ENCODE measurements at regions of chr3 and their contacts with region 1.

Region 1: GRCh38 chr3:53072653-53073552 is 27.0 kb upstream of the SFMBT1 start:
- DNase-seq: peak; percentile 87 to 92 (median 88)
- H3K4me3 ChIP-seq: peak overlapping the region; percentile 77 to 79
- H3K4me3 Mint-ChIP-seq: peak overlapping the region; percentile 88 to 96 (median 92)
- H3K27ac ChIP-seq: peak overlapping the region; percentile 67
- H3K27ac Mint-ChIP-seq: peak overlapping the region; percentile 90 to 96 (median 94)
- H3K4me1 ChIP-seq: peaks cover 10% of the 10 kb centered on the region
- H3K4me1 Mint-ChIP-seq: peaks cover 7 to 19% (median 16%) of the 10 kb centered on the region in 4 donors
- H3K27me3 ChIP-seq: no peaks in the 10 kb centered on the region
- H3K27me3 Mint-ChIP-seq: no peaks in the 10 kb centered on the region

Region 2: GRCh38 chr3:52845691-52846431 is 227.0 kb before region 1 on chr3:
- CTCF ChIA-PET with region 1: interaction called, 6 read pairs
- POLR2A ChIA-PET with region 1: no interaction called
- intact Hi-C with region 1: loop called (anchors 1 kb)
- DNase-seq: peak in 2 of 5 donors; percentile 9 to 12
- H3K4me3 ChIP-seq: no peak overlapping the region
- H3K4me3 Mint-ChIP-seq: no peak overlapping the region
- H3K27ac ChIP-seq: no peak overlapping the region
- H3K27ac Mint-ChIP-seq: peak overlapping the region in 1 of 7 donors; percentile 77
- H3K4me1 ChIP-seq: no peaks in the 10 kb centered on the region
- H3K4me1 Mint-ChIP-seq: peaks cover 0 to 5% (median under 1%) of the 10 kb centered on the region in 4 donors
- H3K27me3 ChIP-seq: no peaks in the 10 kb centered on the region
- H3K27me3 Mint-ChIP-seq: no peaks in the 10 kb centered on the region

Region 3: DNA sequence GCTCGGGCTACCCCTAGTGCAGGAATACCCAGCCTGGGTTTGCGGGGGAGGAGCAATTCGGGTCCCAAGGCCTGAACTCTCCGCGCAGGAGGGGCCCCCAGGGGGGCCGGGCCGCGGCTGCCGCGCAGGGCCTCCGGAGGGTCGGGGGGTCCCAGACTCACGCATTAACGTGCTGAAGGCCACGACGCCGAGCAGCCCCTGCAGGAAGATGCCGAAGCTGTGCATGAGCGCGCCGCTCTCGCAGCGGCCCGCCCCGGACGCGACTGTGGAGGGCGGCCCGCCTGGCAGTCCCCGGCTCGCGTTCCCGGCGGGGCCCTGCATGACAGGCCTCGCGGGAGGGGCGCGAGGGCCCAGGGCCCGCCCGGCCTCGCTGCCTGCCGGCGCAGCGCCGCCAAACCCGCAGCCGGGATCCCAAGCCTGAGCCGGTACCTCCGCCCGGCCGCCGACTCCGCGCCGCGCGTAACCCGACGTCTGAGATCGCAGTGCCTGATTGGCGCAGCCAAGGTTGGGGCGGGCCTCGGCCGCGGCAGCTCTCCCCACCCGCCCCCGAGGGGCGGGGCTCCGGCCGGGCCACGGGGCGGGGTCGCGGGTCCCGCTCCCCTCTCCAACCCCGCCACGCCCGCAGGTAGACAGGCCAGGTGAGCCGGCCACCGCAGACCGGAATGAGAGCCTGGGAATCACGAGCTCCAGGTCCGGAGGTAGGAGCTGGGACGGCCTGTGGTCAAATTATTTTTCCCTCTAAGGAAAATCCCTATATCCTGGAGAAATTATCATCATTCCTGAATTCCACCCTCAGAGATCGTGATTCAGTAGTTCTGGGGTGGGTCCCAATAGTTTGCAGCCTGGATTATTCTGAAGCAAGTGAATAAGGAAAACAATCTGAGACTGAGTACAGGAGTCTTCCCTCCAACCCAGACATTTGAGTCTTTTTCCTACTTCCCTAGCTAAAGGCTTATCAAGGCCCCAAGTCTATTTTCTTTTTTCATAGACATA is 175.5 kb before region 1 on chr3 and contains the start of gene STIMATE:
- CTCF ChIA-PET with region 1: no interaction called
- POLR2A ChIA-PET with region 1: interaction called, 3 read pairs
- intact Hi-C with region 1: loop called (anchors 2 kb)
- DNase-seq: peak; percentile 86 to 90 (median 88)
- H3K4me3 ChIP-seq: peak within 1 kb of the TSS; percentile 78 to 94
- H3K4me3 Mint-ChIP-seq: peak within 1 kb of the TSS; percentile 88 to 97 (median 95)
- H3K27ac ChIP-seq: peak within 1 kb of the TSS; percentile 65
- H3K27ac Mint-ChIP-seq: peak within 1 kb of the TSS; percentile 86 to 97 (median 95)
- H3K4me1 ChIP-seq: peaks cover 47% of the 10 kb centered on the region
- H3K4me1 Mint-ChIP-seq: peaks cover 39 to 53% (median 47%) of the 10 kb centered on the region in 4 donors
- H3K27me3 ChIP-seq: no peaks in the 10 kb centered on the region
- H3K27me3 Mint-ChIP-seq: no peaks in the 10 kb centered on the region
- total RNA-seq, gene STIMATE: 54.9 to 58.6 TPM

Region 4: DNA sequence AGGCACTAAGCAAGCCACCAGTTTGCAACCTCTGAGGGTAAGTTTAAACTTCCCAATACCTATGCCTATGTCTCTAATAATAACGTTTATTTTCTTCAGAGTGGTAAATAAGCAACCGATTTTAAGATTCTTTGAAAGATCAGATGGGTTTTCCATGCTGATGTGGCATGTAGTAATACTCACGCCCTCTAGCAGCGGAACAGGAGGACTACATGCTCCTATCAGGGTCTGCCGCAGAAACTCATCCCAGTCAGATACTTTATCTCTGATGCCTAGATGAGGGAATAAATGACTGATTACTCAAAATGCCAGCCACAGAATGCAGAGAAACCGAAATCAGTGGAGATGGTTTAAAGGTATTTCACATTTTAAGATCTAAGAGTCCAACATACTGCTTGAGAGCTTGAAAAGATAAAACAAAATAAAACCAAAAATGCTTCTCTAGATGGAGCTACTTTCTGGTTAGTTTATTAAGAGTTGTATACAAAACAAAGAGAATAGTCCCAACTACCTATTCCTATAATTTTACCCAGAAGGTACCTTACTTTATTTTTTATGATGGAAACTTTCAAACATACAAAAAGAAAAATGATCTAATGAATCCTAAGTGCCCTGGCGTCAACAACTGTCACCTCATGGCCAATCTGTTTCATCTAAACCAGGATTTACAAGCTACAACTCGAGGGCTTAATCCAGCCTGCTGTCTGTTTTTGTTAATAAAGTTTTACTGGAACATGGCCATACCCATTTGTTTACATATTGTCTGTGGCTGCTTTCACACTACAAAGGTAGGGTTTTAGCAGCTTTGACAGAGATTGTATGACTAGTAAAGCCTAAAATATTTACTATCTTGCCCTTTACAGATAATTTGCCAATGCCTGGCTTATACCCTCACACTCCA is 138.0 kb before region 1 on chr3:
- CTCF ChIA-PET with region 1: interaction called, 5 read pairs
- POLR2A ChIA-PET with region 1: no interaction called
- intact Hi-C with region 1: loop called (anchors 1 kb)
- DNase-seq: peak; percentile 49 to 55 (median 49)
- H3K4me3 ChIP-seq: no peak overlapping the region
- H3K4me3 Mint-ChIP-seq: peak overlapping the region in 6 of 8 donors; percentile 3 to 52 (median 26)
- H3K27ac ChIP-seq: no peak overlapping the region
- H3K27ac Mint-ChIP-seq: peak overlapping the region; percentile 49 to 89 (median 84)
- H3K4me1 ChIP-seq: peaks cover 11% of the 10 kb centered on the region
- H3K4me1 Mint-ChIP-seq: peaks cover 10 to 17% (median 14%) of the 10 kb centered on the region in 4 donors
- H3K27me3 ChIP-seq: no peaks in the 10 kb centered on the region
- H3K27me3 Mint-ChIP-seq: no peaks in the 10 kb centered on the region

Region 5: GRCh38 chr3:53045518-53046170 is 27.3 kb before region 1 on chr3 and contains the start of gene SFMBT1:
- CTCF ChIA-PET with region 1: interaction called, 10 read pairs
- POLR2A ChIA-PET with region 1: interaction called, 16 read pairs
- intact Hi-C with region 1: loop called (anchors 1 kb)
- DNase-seq: peak; percentile 71 to 80 (median 73)
- H3K4me3 ChIP-seq: peak within 1 kb of the TSS; percentile 42 to 94
- H3K4me3 Mint-ChIP-seq: peak within 1 kb of the TSS; percentile 97 to 99 (median 98)
- H3K27ac ChIP-seq: peak within 1 kb of the TSS; percentile 75
- H3K27ac Mint-ChIP-seq: peak within 1 kb of the TSS; percentile 98 to 100 (median 99)
- H3K4me1 ChIP-seq: peaks cover 46% of the 10 kb centered on the region
- H3K4me1 Mint-ChIP-seq: peaks cover 27 to 53% (median 38%) of the 10 kb centered on the region in 4 donors
- H3K27me3 ChIP-seq: no peaks in the 10 kb centered on the region
- H3K27me3 Mint-ChIP-seq: peaks cover 0 to 1% of the 10 kb centered on the region in 2 donors
- total RNA-seq, gene SFMBT1: 49.3 to 50.8 TPM